ENCODE measurements at regions of chr4 and their contacts with region 1.

Region 1: GRCh38 chr4:157220371-157220881 is at the start of gene GRIA2:
- DNase-seq: peak; percentile 84
- total RNA-seq, gene GRIA2: 1.6 TPM

Region 2: GRCh38 chr4:157978680-157979361 is 758.4 kb after region 1 on chr4:
- intact Hi-C with region 1: loop called (anchors 5 to 10 kb)
- DNase-seq: no peak

Measured in posterior vena cava (tissue), 2 donors.